Mammary epithelial cell (primary cell): ENCODE measurements at regions of chr16 and their contacts with region 1.

Region 1: GRCh38 chr16:86664533-86665318 is 86.4 kb downstream of the FOXL1 start:
- DNase-seq: peak; percentile 99
- H3K4me3 ChIP-seq: peak overlapping the region in 1 of 3 experiments; percentile 23
- H3K27ac ChIP-seq: peak overlapping the region; percentile 96
- H3K4me1 ChIP-seq: peaks cover 28% of the 10 kb centered on the region
- H3K27me3 ChIP-seq: no peaks in the 10 kb centered on the region
- CTCF ChIP-seq: no peak

Region 2: DNA sequence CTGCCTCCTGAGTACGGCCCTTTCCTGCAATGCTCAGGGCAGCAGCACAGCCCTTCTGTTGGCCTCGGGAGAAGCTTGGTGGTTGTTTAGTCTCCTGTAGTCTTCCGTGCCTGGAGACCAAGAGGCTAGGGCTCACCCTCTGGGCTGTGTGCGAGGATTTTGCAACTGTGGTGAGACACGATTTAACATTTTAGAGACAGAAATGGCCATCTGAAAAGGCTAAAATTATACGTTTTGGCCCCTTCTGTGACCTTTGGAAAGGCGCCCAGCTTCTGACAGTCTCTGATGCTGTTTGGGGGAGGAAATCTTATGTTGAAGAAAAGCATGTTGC is 53.2 kb before region 1 on chr16:
- CTCF ChIA-PET with region 1: no interaction called
- dilution Hi-C with region 1: loop called (anchors 5 kb)
- in situ Hi-C with region 1: no loop called
- intact Hi-C with region 1: no loop called
- DNase-seq: no peak
- H3K4me3 ChIP-seq: no peak overlapping the region
- H3K27ac ChIP-seq: no peak overlapping the region
- H3K4me1 ChIP-seq: no peaks in the 10 kb centered on the region
- H3K27me3 ChIP-seq: no peaks in the 10 kb centered on the region
- CTCF ChIP-seq: no peak

Region 3: DNA sequence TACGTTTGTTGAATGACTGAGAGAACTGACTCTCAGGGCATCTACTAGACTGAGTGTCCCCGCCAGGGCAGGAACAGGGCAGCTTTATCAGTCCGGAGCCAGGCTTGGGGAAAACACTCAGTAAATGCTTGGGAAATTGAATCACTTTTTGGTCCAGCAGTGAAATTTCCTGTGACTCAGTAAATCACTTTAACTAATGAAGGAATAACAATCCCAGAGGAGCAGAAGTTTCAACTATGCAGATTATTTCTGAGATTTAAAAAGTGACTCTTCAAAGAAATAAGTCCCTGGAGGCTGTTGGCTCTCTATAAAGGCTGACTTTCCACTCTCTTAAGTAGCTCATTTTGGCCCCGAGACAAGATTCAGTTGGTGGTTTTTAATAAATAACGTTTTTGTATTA is 15.4 kb after region 1 on chr16:
- CTCF ChIA-PET with region 1: no interaction called
- dilution Hi-C with region 1: no loop called
- in situ Hi-C with region 1: no loop called
- intact Hi-C with region 1: loop called (anchors 1 kb)
- DNase-seq: peak; percentile 77
- H3K4me3 ChIP-seq: no peak overlapping the region
- H3K27ac ChIP-seq: no peak overlapping the region
- H3K4me1 ChIP-seq: peaks cover 32% of the 10 kb centered on the region
- H3K27me3 ChIP-seq: no peaks in the 10 kb centered on the region
- CTCF ChIP-seq: no peak

Region 4: GRCh38 chr16:87227296-87227951 is 562.7 kb after region 1 on chr16:
- CTCF ChIA-PET with region 1: no interaction called
- dilution Hi-C with region 1: no loop called
- in situ Hi-C with region 1: no loop called
- intact Hi-C with region 1: no loop called
- DNase-seq: no peak
- H3K4me3 ChIP-seq: no peak overlapping the region
- H3K27ac ChIP-seq: no peak overlapping the region
- H3K4me1 ChIP-seq: no peaks in the 10 kb centered on the region
- H3K27me3 ChIP-seq: no peaks in the 10 kb centered on the region
- CTCF ChIP-seq: no peak

Region 5: GRCh38 chr16:87387942-87388817 is 723.5 kb after region 1 on chr16:
- CTCF ChIA-PET with region 1: no interaction called
- dilution Hi-C with region 1: no loop called
- in situ Hi-C with region 1: no loop called
- intact Hi-C with region 1: loop called (anchors 10 kb)
- DNase-seq: peak; percentile 99
- H3K4me3 ChIP-seq: peak overlapping the region in 1 of 3 experiments; percentile 20
- H3K27ac ChIP-seq: peak overlapping the region; percentile 62
- H3K4me1 ChIP-seq: peaks cover 26% of the 10 kb centered on the region
- H3K27me3 ChIP-seq: no peaks in the 10 kb centered on the region
- CTCF ChIP-seq: no peak